Mammary epithelial cell (primary cell): ENCODE measurements at regions of chr20 and their contacts with region 1.

Region 1: GRCh38 chr20:38472513-38473372 is at the start of gene RALGAPB:
- DNase-seq: peak; percentile 99
- H3K4me3 ChIP-seq: peak within 1 kb of the TSS; percentile 69 to 96 (median 89)
- H3K27ac ChIP-seq: peak within 1 kb of the TSS; percentile 77
- H3K4me1 ChIP-seq: peaks cover 15% of the 10 kb centered on the region
- H3K27me3 ChIP-seq: no peaks in the 10 kb centered on the region
- CTCF ChIP-seq: peak in 1 of 2 donors; percentile 66
- total RNA-seq, gene RALGAPB: 42.3 to 54.7 TPM

Region 2: GRCh38 chr20:38270869-38271605 is 201.7 kb before region 1 on chr20:
- CTCF ChIA-PET with region 1: no interaction called
- dilution Hi-C with region 1: no loop called
- in situ Hi-C with region 1: no loop called
- intact Hi-C with region 1: no loop called
- DNase-seq: peak; percentile 91
- H3K4me3 ChIP-seq: no peak overlapping the region
- H3K27ac ChIP-seq: no peak overlapping the region
- H3K4me1 ChIP-seq: peaks cover 40% of the 10 kb centered on the region
- H3K27me3 ChIP-seq: no peaks in the 10 kb centered on the region
- CTCF ChIP-seq: no peak

Region 3: GRCh38 chr20:38338849-38339520 is 133.8 kb before region 1 on chr20:
- CTCF ChIA-PET with region 1: no interaction called
- dilution Hi-C with region 1: no loop called
- in situ Hi-C with region 1: no loop called
- intact Hi-C with region 1: loop called (anchors 1 kb)
- DNase-seq: peak; percentile 34
- H3K4me3 ChIP-seq: no peak overlapping the region
- H3K27ac ChIP-seq: no peak overlapping the region
- H3K4me1 ChIP-seq: no peaks in the 10 kb centered on the region
- H3K27me3 ChIP-seq: no peaks in the 10 kb centered on the region
- CTCF ChIP-seq: peak; percentile 25 to 64

Region 4: DNA sequence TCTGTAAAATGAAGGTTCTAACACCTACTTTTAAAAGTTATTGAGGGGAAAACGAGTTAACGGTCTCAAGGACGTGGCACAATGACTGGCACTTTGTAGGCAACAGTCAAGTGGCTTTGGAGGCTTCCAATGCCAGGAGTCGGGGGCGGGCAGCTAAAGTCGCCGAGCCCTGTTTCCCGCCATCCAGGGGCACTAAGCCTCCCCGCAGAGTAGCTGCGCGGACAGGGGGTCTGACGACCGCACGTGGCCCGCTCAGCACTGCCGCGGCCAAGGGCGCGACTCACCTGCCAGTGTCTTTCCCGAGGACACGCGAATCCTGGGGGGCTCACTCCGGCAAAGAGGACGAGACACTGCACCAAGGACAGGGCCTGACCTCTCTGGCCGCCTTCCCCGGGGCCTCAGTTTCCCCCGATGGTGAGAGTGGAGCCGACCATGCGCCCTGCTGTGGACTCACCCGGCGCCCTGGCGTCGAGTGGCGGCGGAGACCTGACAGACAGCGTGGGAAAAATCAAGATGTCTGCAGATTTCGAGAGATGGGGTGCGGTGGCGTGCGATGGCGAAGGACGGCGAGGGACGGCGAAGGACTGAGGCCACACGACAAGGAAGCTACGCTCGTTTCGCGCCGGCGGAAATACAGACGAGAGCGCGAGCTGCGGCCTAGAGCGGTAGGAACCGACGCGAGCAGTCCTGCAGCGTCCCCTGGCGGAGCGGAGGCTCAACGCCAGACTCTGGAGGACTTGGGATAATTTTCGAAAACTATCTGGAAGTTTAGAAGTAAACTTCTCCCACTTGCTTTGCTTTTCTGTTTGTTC is 37.8 kb before region 1 on chr20 and contains the start of gene SNHG17:
- CTCF ChIA-PET with region 1: no interaction called
- dilution Hi-C with region 1: no loop called
- in situ Hi-C with region 1: no loop called
- intact Hi-C with region 1: loop called (anchors 1 kb)
- DNase-seq: peak; percentile 82
- H3K4me3 ChIP-seq: peak within 1 kb of the TSS; percentile 66 to 95 (median 79)
- H3K27ac ChIP-seq: peak within 1 kb of the TSS; percentile 82
- H3K4me1 ChIP-seq: peaks cover 21% of the 10 kb centered on the region
- H3K27me3 ChIP-seq: no peaks in the 10 kb centered on the region
- CTCF ChIP-seq: peak; percentile 100
- total RNA-seq, gene SNHG17: 8.0 to 109 TPM

Region 5: GRCh38 chr20:38446441-38447209 is 26.1 kb before region 1 on chr20:
- CTCF ChIA-PET with region 1: interaction called, 3 read pairs
- dilution Hi-C with region 1: no loop called
- in situ Hi-C with region 1: no loop called
- intact Hi-C with region 1: loop called (anchors 2 kb)
- DNase-seq: peak; percentile 84
- H3K4me3 ChIP-seq: peak overlapping the region; percentile 76 to 80 (median 79)
- H3K27ac ChIP-seq: peak overlapping the region; percentile 64
- H3K4me1 ChIP-seq: peaks cover 9% of the 10 kb centered on the region
- H3K27me3 ChIP-seq: peaks cover 2% of the 10 kb centered on the region
- CTCF ChIP-seq: peak; percentile 89 to 95